ENCODE measurements at regions of chr13 and their contacts with region 1.

Region 1: DNA sequence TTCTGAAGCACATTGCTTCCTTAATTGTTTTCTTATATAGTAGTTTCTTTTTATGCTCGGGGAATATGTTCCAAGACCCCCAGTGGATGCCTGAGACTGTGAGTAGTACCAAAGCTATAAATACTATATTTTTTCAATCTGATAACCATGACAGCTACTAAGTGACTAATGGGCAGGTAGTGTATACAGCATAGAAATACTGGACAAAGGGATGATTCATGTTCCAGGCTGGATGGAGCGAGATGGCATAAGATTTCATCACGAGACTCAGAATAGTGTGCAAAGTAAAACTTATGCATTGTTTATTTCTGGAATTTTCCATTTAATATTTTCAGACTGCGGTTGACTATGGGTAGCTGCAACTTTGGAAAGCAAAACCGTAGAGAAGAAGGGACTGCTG is 47.9 kb upstream of the OLFM4 start:
- DNase-seq: no peak
- H3K4me3 ChIP-seq: no peak overlapping the region
- CTCF ChIP-seq: no peak
- POLR2A ChIP-seq: no peak

Region 2: GRCh38 chr13:52141297-52141696 is 839.4 kb before region 1 on chr13:
- intact Hi-C with region 1: loop called (anchors 5 kb)
- DNase-seq: no peak
- H3K4me3 ChIP-seq: no peak overlapping the region
- CTCF ChIP-seq: no peak
- POLR2A ChIP-seq: no peak